Activated naive CD4-positive, alpha-beta T cell treated with anti-CD3 and anti-CD28 coated beads for 36 hours (primary cell): ENCODE measurements at regions of chr17 and their contacts with region 1.

Region 1: DNA sequence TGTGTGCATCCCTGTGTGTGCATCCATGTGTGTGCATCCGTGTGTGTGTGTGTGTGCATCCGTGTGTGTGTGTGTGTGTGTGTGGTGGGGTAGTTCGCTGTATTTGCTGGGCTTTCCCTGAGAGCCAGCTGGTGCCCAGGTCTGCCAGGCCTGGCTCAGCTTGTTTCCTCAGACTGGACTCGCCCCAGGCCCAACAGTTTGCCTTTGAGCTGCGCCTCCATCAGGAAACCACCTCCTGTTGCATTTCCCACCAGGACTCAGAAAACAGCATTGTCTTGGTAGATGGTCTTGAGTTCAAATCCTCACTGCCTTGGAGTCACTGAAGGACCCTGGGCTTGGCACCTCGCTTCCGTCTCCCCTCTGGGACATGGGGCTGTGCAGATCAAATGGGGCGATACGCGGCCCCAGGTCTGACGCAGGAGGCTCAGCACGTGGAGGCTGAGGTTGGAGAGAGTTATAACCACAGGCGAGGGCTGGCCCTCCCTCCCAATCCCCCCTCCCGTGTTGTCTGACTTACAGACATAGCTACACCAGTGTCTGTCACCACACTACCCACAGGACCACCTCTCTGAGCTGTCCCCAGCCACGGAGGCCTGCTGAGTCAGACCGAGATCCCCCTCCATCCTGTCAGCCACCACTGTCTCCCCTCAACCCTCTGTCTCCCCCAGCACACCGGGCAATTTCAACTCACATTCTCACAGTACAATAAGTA is 4.7 kb downstream of the ITGAE start:
- DNase-seq: peak; percentile 49
- H3K4me3 Mint-ChIP-seq: no peak overlapping the region
- H3K27ac Mint-ChIP-seq: no peak overlapping the region
- H3K4me1 Mint-ChIP-seq: peaks cover 10% of the 10 kb centered on the region
- H3K27me3 Mint-ChIP-seq: no peaks in the 10 kb centered on the region

Region 2: GRCh38 chr17:3762922-3763776 is 33.1 kb before region 1 on chr17:
- CTCF ChIA-PET with region 1: no interaction called
- intact Hi-C with region 1: loop called (anchors 2 kb)
- DNase-seq: peak; percentile 60
- H3K4me3 Mint-ChIP-seq: no peak overlapping the region
- H3K27ac Mint-ChIP-seq: peak overlapping the region; percentile 42
- H3K4me1 Mint-ChIP-seq: peaks cover 34% of the 10 kb centered on the region
- H3K27me3 Mint-ChIP-seq: no peaks in the 10 kb centered on the region